ENCODE measurements at regions of chr6 and their contacts with region 1.

Region 1: GRCh38 chr6:16849280-16849987 is 88.2 kb upstream of the ATXN1 start:
- DNase-seq: peak; percentile 79
- ATAC-seq: peak; percentile 94
- H3K4me3 ChIP-seq: no peak overlapping the region
- H3K27ac ChIP-seq: peak overlapping the region; percentile 38
- H3K4me1 ChIP-seq: peaks cover 4% of the 10 kb centered on the region
- H3K27me3 ChIP-seq: no peaks in the 10 kb centered on the region
- CTCF ChIP-seq: no peak
- POLR2A ChIP-seq: no peak
- RAD21 ChIP-seq: no peak

Region 2: DNA sequence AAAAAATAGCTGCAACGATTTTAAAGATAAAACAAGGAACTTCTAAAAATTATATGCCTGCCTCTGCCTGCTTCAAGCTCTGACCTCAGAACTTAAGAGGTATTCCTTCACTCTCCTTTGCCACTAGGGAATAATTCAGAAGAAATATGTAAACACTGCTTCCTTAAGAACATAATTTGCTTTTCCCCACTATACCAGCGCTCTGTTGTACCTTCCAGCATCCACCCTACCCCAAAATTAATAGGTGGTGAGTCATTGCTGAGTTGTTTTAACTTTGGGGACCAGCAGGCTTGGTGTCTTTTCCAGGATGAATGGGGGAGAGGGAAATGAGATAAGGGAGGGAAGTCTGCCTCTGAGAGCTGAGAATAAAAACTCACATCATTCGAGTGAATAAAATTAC is 19.5 kb after region 1 on chr6:
- CTCF ChIA-PET with region 1: no interaction called
- POLR2A ChIA-PET with region 1: interaction called, 11 read pairs
- dilution Hi-C with region 1: no loop called
- in situ Hi-C with region 1: no loop called
- intact Hi-C with region 1: no loop called
- DNase-seq: peak; percentile 34
- ATAC-seq: peak; percentile 82
- H3K4me3 ChIP-seq: no peak overlapping the region
- H3K27ac ChIP-seq: no peak overlapping the region
- H3K4me1 ChIP-seq: peaks cover 5% of the 10 kb centered on the region
- H3K27me3 ChIP-seq: peaks cover 2% of the 10 kb centered on the region; the same call in 1 of the 2 replicates
- CTCF ChIP-seq: no peak
- POLR2A ChIP-seq: no peak
- RAD21 ChIP-seq: no peak